Activated CD4-positive, alpha-beta memory T cell treated with anti-CD3 and anti-CD28 coated beads for 36 hours (primary cell): ENCODE measurements at regions of chr12 and their contacts with region 1.

Region 1: GRCh38 chr12:12032851-12033588 is 37.7 kb upstream of the BCL2L14 start:
- DNase-seq: peak; percentile 81
- H3K4me3 Mint-ChIP-seq: peak overlapping the region; percentile 72
- H3K27ac Mint-ChIP-seq: peak overlapping the region; percentile 88
- H3K4me1 Mint-ChIP-seq: peaks cover 69% of the 10 kb centered on the region
- H3K27me3 Mint-ChIP-seq: peaks cover 1% of the 10 kb centered on the region

Region 2: GRCh38 chr12:11581179-11581755 is 451.8 kb before region 1 on chr12:
- CTCF ChIA-PET with region 1: interaction called, 157 read pairs
- POLR2A ChIA-PET with region 1: interaction called, 3 read pairs
- intact Hi-C with region 1: loop called (anchors 1 kb)
- DNase-seq: peak; percentile 63
- H3K4me3 Mint-ChIP-seq: no peak overlapping the region
- H3K27ac Mint-ChIP-seq: no peak overlapping the region
- H3K4me1 Mint-ChIP-seq: peaks cover 23% of the 10 kb centered on the region
- H3K27me3 Mint-ChIP-seq: peaks cover 2% of the 10 kb centered on the region

Region 3: DNA sequence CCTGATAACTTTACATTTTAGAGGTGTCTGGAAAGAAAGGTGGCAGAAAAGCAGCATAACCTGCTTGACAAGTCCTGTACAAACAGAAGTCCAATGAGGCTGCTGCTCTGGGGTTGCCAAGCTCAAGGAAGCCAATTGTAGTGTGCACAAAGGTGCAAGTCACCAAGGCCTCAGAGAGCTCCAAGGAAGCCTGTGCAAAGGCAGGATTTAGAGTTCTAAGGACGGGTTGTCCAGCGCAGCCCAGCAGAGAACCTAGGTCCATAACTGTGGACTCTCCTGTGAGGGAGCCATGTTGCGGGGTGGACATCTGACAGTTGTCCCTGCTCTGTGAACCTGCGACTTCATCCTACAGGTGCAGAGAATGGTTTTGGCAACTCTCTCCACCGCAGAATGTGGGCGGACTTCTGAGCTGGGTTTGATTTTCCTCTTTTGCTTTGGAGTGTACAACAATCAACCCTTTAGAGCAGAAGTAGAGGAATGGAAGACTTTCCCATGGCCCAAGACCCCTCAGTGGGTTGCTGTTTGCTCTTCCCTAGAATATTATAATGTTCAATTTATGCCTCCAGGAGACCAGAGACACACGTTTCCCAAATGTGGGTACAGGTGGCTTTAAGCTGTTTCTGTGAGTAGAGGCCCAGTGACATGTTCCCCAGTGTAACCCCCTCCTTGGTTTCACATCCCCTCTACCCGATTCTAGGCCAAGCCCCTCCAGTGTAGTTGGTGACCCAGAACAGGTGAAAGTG is 302.6 kb before region 1 on chr12:
- CTCF ChIA-PET with region 1: interaction called, 12 read pairs
- POLR2A ChIA-PET with region 1: interaction called, 3 read pairs
- intact Hi-C with region 1: loop called (anchors 5 kb)
- DNase-seq: peak; percentile 10
- H3K4me3 Mint-ChIP-seq: no peak overlapping the region
- H3K27ac Mint-ChIP-seq: peak overlapping the region; percentile 62
- H3K4me1 Mint-ChIP-seq: peaks cover 76% of the 10 kb centered on the region
- H3K27me3 Mint-ChIP-seq: no peaks in the 10 kb centered on the region

Region 4: GRCh38 chr12:11812586-11813427 is 220.2 kb before region 1 on chr12:
- CTCF ChIA-PET with region 1: interaction called, 15 read pairs
- POLR2A ChIA-PET with region 1: no interaction called
- intact Hi-C with region 1: no loop called
- DNase-seq: peak; percentile 41
- H3K4me3 Mint-ChIP-seq: peak overlapping the region; percentile 63
- H3K27ac Mint-ChIP-seq: peak overlapping the region; percentile 78
- H3K4me1 Mint-ChIP-seq: peaks cover 80% of the 10 kb centered on the region
- H3K27me3 Mint-ChIP-seq: no peaks in the 10 kb centered on the region

Region 5: DNA sequence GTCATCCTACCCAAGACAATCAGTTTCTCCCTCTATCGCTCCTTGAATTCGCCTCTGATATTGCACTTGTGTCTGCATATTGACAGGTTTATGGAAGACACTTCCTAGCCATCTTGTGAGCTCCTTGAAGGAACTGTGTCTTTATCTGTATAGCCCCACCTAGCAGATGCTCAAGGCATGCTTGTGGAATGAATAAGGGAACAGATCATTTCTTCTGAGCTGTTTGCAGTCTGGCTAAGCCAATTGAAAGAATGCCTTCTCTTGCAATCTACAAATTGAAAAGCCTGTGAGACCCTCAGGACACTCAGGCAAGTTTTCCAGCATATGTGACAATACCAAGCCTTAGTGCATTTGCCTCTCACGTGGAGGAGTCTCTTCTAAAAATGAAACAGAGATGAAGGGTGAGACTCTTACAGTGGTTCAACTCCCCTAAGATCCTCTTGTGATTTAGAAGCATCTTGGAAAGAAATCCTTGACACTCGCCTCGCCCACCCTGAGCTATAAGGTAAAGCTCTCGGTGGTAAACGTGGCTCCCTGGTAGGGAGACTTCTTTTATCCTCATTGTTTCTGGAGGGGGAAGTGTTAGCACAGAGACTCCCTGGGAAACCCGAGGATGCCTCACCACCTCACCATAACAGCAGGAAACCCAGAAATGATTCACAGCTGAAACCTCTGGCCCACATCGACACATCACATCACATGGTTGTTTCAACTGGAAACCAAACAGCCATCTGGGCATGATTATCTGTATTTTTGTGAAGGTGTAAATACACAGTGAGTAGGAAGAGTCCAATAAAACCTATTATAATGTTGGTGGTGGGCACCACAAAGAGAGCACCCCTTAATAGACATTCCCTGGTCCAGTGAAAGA is 74.6 kb before region 1 on chr12:
- CTCF ChIA-PET with region 1: interaction called, 5 read pairs
- POLR2A ChIA-PET with region 1: interaction called, 3 read pairs
- intact Hi-C with region 1: loop called (anchors 2 kb)
- DNase-seq: peak; percentile 80
- H3K4me3 Mint-ChIP-seq: peak overlapping the region; percentile 50
- H3K27ac Mint-ChIP-seq: peak overlapping the region; percentile 90
- H3K4me1 Mint-ChIP-seq: peaks cover 37% of the 10 kb centered on the region
- H3K27me3 Mint-ChIP-seq: no peaks in the 10 kb centered on the region

Region 6: DNA sequence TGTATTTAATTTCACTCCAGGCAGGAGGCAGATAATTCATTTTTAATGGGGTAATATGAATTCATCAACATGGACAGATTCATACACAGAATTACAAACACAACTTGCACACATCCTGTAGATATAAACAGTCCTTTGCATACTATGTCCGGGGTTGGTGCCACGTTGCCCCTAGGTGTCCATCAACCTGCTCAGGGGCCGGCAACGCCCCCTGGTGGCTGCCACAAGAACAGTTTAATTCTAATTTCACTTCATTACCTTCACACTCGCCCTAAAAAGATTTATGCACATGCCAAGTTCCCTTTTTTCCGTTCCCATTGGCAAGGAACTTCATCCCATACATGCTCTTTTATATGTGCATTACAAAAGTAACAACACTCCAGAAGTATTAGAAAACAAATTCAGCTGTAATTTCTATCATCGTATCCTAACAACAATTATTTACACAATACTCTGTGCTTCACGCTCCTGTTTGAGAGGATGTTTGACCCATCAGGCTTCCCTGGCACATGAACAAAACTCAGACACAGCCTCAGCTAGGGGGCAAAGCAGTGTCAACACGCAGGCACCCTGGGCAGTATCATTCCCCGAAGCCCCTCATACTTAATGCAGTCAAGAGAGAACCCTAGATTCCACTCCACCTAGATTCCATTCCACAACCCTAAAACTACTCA is 301.5 kb after region 1 on chr12:
- CTCF ChIA-PET with region 1: interaction called, 5 read pairs
- POLR2A ChIA-PET with region 1: no interaction called
- intact Hi-C with region 1: loop called (anchors 2 kb)
- DNase-seq: peak; percentile 77
- H3K4me3 Mint-ChIP-seq: no peak overlapping the region
- H3K27ac Mint-ChIP-seq: no peak overlapping the region
- H3K4me1 Mint-ChIP-seq: peaks cover 25% of the 10 kb centered on the region
- H3K27me3 Mint-ChIP-seq: no peaks in the 10 kb centered on the region